ENCODE measurements at regions of chr15 and their contacts with region 1.

Region 1: GRCh38 chr15:79853458-79854328 is 43.1 kb downstream of the MTHFS start:
- DNase-seq: peak; percentile 81
- H3K4me3 ChIP-seq: no peak overlapping the region
- H3K27ac ChIP-seq: no peak overlapping the region
- H3K27me3 ChIP-seq: no peaks in the 10 kb centered on the region
- CTCF ChIP-seq: peak; percentile 99

Region 2: GRCh38 chr15:79339564-79340314 is 514.0 kb before region 1 on chr15:
- CTCF ChIA-PET with region 1: interaction called, 305 read pairs
- POLR2A ChIA-PET with region 1: no interaction called
- DNase-seq: peak; percentile 10
- H3K4me3 ChIP-seq: no peak overlapping the region
- H3K27ac ChIP-seq: no peak overlapping the region
- H3K27me3 ChIP-seq: no peaks in the 10 kb centered on the region
- CTCF ChIP-seq: peak; percentile 98

Region 3: GRCh38 chr15:79832367-79833120 is 21.1 kb before region 1 on chr15:
- CTCF ChIA-PET with region 1: interaction called, 28 read pairs
- POLR2A ChIA-PET with region 1: no interaction called
- DNase-seq: no peak
- H3K4me3 ChIP-seq: no peak overlapping the region
- H3K27ac ChIP-seq: no peak overlapping the region
- H3K27me3 ChIP-seq: no peaks in the 10 kb centered on the region
- CTCF ChIP-seq: no peak

Region 4: GRCh38 chr15:79863886-79864285 is 10.2 kb after region 1 on chr15:
- CTCF ChIA-PET with region 1: interaction called, 50 read pairs
- POLR2A ChIA-PET with region 1: no interaction called
- DNase-seq: no peak
- H3K4me3 ChIP-seq: no peak overlapping the region
- H3K27ac ChIP-seq: no peak overlapping the region
- H3K27me3 ChIP-seq: no peaks in the 10 kb centered on the region
- CTCF ChIP-seq: no peak

Region 5: GRCh38 chr15:79887054-79887915 is 33.6 kb after region 1 on chr15:
- CTCF ChIA-PET with region 1: interaction called, 18 read pairs
- POLR2A ChIA-PET with region 1: no interaction called
- DNase-seq: no peak
- H3K4me3 ChIP-seq: no peak overlapping the region
- H3K27ac ChIP-seq: no peak overlapping the region
- H3K27me3 ChIP-seq: no peaks in the 10 kb centered on the region
- CTCF ChIP-seq: no peak

Region 6: DNA sequence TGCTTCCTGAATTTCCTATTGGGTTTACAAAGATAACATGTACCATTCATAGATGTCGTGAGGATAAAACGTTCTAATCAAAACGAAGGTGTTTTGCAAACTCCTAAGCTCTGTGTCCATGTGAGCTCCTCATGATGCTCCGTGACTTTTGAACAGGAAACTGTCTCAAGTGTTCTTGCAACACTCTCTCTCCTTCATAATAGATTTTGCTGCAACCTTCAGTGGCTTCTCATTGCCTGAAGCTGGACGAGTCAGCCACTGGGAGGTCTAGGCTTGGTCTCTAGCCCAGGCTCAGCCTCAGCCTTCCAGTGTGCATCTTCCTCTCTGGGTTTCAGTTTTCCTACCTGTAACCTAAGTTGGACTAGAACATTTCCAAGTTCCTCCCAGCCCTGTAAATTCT is 136.0 kb after region 1 on chr15:
- CTCF ChIA-PET with region 1: interaction called, 68 read pairs
- POLR2A ChIA-PET with region 1: no interaction called
- DNase-seq: no peak
- H3K4me3 ChIP-seq: no peak overlapping the region
- H3K27ac ChIP-seq: no peak overlapping the region
- H3K27me3 ChIP-seq: no peaks in the 10 kb centered on the region
- CTCF ChIP-seq: no peak

Region 7: GRCh38 chr15:80615761-80616391 is 762.2 kb after region 1 on chr15:
- CTCF ChIA-PET with region 1: no interaction called
- POLR2A ChIA-PET with region 1: no interaction called
- DNase-seq: peak; percentile 33
- H3K4me3 ChIP-seq: no peak overlapping the region
- H3K27ac ChIP-seq: peak overlapping the region; percentile 48
- H3K27me3 ChIP-seq: no peaks in the 10 kb centered on the region
- CTCF ChIP-seq: no peak

Measured in AG04450 (cell line).